ENCODE measurements at regions of chr11 and their contacts with region 1.

Region 1: GRCh38 chr11:64778508-64779346 is at the start of gene SF1:
- DNase-seq: peak; percentile 100
- H3K4me3 Mint-ChIP-seq: peak within 1 kb of the TSS; percentile 76
- H3K27ac Mint-ChIP-seq: peak within 1 kb of the TSS; percentile 98
- H3K4me1 Mint-ChIP-seq: peaks cover 13% of the 10 kb centered on the region
- H3K27me3 Mint-ChIP-seq: no peaks in the 10 kb centered on the region
- CTCF ChIP-seq: no peak
- total RNA-seq, gene SF1: 446 and 503 TPM in 2 replicates

Region 2: DNA sequence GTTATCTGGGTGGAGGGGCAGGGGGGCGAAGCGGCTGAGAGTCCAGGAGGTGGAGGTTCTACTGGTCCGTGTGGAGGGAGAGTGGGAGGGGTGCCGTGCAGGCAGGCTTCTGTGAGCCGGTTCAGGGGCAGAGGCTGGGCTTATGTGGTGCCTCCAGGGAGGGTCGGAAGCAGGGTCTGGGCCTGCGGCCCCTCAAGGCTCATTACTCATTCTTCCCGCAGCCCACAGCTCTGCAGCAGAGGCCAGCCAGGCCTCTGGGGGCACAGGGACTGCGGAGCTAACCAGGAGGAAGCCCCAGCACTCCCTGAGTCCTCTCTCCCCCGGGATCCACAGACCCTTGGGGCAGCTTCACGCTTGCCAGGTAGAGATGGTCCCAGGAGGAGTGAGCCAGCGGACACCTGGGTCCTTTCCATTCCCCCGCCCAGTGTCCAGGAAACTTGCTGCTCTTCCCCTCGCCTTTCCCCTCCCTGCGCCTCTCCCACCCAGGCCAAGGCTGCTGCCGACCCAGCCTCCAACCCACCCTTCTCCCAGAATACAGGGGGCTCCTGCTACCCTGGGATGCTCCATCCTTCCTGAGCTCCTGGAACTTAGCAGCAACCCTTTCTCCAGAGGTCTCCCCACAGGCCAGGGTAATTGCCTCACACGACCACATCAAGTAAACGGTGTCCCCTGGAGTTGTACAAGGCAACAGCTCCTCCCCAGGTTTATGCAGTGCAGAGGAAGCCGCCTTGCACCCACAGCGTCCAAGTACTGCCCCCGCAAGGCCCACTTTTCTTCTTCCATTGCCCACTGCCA is 62.1 kb before region 1 on chr11:
- CTCF ChIA-PET with region 1: no interaction called
- POLR2A ChIA-PET with region 1: no interaction called
- intact Hi-C with region 1: no loop called
- DNase-seq: no peak
- H3K4me3 Mint-ChIP-seq: no peak overlapping the region
- H3K27ac Mint-ChIP-seq: no peak overlapping the region
- H3K4me1 Mint-ChIP-seq: no peaks in the 10 kb centered on the region
- H3K27me3 Mint-ChIP-seq: peaks cover 82% of the 10 kb centered on the region
- CTCF ChIP-seq: no peak

Region 3: DNA sequence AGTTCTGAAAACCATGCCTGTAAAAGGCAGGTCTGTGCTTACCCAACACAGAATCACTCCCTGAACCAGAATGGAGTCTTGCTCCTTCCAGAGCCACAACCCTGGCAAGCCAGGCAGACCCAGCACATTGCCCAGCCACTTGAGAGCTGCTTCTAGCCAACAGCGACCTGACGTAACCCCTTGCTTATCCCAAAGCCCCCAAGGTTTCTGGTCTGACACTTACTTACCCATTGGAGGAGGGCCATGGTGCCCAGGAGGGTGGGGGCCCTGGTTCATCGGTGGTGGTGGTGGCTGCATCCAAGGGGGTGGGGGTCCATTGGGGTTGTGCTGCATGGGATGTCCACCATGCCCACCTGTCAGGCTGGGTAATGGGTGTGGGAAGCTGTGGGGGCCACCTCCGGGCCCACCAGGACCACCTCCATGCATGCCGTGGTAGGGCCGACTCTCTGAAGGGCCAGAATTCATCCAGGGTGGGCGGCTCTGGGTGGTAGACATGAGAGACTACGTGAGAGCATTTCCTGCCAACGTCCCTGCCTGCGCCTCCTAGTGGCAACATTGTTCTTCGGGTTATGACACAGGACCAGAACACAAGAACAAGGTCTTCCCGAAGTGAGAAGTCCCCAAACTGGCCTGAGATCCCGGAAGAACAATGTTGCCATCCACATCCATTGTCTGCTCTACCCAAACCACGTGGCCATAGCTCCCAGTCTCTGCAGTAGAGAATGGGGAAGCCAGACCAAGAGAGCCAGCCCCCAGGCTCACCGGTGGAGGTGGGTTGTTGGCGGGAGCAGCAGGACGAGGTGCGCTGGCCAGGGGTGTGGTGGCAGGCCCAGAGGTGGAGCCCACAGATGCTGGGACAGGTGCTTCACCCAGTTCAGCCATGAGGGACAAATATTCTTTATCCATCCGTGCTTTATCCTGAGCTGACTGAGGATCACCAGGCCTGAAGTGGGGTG is 11.1 kb before region 1 on chr11:
- CTCF ChIA-PET with region 1: interaction called, 15 read pairs
- POLR2A ChIA-PET with region 1: interaction called, 86 read pairs
- intact Hi-C with region 1: no loop called
- DNase-seq: peak; percentile 68
- H3K4me3 Mint-ChIP-seq: no peak overlapping the region
- H3K27ac Mint-ChIP-seq: no peak overlapping the region
- H3K4me1 Mint-ChIP-seq: peaks cover 7% of the 10 kb centered on the region
- H3K27me3 Mint-ChIP-seq: no peaks in the 10 kb centered on the region
- CTCF ChIP-seq: peak; percentile 61

Region 4: DNA sequence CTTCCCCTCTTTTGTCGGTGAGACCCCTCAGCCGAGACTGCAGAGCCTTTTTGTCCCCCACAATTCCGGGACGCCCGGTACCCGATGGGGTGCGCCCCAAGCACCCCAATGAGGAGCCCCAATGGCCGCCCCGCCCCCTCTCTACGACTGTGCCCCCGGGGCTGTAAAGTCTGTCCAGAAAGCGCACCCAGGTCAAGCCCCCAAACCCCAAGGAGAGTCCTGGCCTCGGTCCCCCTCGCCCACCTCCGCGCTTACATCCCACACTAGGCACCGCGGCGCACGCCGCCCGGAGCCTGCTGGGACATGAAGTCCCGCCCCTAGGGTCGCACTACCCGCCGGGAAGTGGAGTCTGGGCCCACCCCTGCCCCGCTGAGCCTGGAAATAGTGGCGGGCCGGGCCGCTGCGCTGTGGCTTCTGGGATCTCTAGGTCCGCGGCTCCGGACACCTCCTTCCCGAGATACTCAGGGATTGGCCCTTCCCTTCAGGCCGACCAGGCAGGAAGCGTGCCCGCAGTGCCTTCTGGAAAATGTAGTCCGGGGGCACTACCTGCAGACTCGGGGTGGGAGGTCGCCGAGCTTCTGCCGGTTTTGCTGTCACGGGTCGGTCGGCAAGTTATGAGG is 31.7 kb after region 1 on chr11 and contains the start of gene MEN1:
- CTCF ChIA-PET with region 1: interaction called, 5 read pairs
- POLR2A ChIA-PET with region 1: interaction called, 27 read pairs
- intact Hi-C with region 1: loop called (anchors 2 kb)
- DNase-seq: peak; percentile 95
- H3K4me3 Mint-ChIP-seq: peak within 1 kb of the TSS; percentile 99
- H3K27ac Mint-ChIP-seq: peak within 1 kb of the TSS; percentile 93
- H3K4me1 Mint-ChIP-seq: peaks cover 10% of the 10 kb centered on the region
- H3K27me3 Mint-ChIP-seq: no peaks in the 10 kb centered on the region
- CTCF ChIP-seq: no peak
- total RNA-seq, gene MEN1: 29.2 and 33.1 TPM in 2 replicates

Region 5: GRCh38 chr11:64834723-64835620 is 56.2 kb after region 1 on chr11:
- CTCF ChIA-PET with region 1: no interaction called
- POLR2A ChIA-PET with region 1: interaction called, 16 read pairs
- intact Hi-C with region 1: no loop called
- DNase-seq: peak; percentile 87
- H3K4me3 Mint-ChIP-seq: peak overlapping the region; percentile 60
- H3K27ac Mint-ChIP-seq: peak overlapping the region; percentile 28
- H3K4me1 Mint-ChIP-seq: peaks cover 10% of the 10 kb centered on the region
- H3K27me3 Mint-ChIP-seq: no peaks in the 10 kb centered on the region
- CTCF ChIP-seq: no peak

Region 6: DNA sequence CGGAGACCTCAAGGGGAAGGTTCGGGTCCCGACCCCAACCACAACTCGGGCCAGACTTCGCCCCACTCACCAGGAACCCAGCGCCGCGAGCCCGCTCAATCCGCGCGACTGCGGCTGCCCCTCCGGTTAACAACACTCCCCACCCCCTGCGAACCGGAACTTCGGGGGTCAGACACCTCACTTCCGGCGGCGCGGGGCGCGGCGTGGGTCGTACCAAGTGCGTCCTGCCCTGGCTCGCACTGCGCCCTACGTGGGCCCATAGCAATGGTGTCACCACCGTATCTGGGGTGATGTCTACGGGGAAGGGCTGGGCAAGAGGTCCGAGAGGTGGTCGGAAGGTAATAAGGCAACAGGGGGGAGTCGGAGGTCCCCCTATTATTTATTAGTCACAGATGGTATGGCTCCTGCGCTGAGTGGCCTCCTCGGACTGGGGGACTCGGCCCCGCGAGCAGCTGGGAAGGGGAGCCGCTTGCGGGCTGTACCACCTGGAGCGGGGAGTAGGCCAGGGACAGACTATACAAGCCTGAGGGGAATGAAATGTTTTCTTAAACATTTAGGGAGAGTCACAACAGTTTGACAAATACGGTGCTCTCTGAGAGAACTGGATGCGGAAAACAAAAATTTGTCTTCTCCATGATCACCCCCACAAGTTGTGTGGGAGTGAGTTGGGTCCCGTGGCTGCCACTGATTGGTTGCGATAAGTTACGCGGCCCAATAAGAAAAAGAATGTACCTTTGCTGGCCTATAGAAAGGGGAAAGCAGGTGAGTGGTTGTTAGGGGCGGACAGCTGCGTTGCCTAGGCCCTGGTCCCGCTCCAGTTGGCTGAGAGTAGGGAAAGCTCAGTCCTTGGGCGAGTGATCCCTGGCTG is 355.9 kb after region 1 on chr11 and contains the start of gene SYVN1:
- CTCF ChIA-PET with region 1: no interaction called
- POLR2A ChIA-PET with region 1: interaction called, 12 read pairs
- intact Hi-C with region 1: no loop called
- DNase-seq: peak; percentile 98
- H3K4me3 Mint-ChIP-seq: peak within 1 kb of the TSS; percentile 99
- H3K27ac Mint-ChIP-seq: peak within 1 kb of the TSS; percentile 100
- H3K4me1 Mint-ChIP-seq: peaks cover 28% of the 10 kb centered on the region
- H3K27me3 Mint-ChIP-seq: no peaks in the 10 kb centered on the region
- CTCF ChIP-seq: no peak
- total RNA-seq, gene SYVN1: 74.9 and 99.8 TPM in 2 replicates